ENCODE measurements at regions of chr1 and their contacts with region 1.

Region 1: GRCh38 chr1:45258059-45258650 is 51.8 kb upstream of the ZSWIM5 start:
- DNase-seq: no peak
- ATAC-seq: no peak
- H3K4me3 ChIP-seq: no peak overlapping the region
- H3K4me3 Mint-ChIP-seq: no peak overlapping the region
- H3K27ac ChIP-seq: no peak overlapping the region
- H3K27ac Mint-ChIP-seq: no peak overlapping the region
- H3K4me1 ChIP-seq: no peaks in the 10 kb centered on the region
- H3K4me1 Mint-ChIP-seq: no peaks in the 10 kb centered on the region
- H3K27me3 ChIP-seq: peaks cover 0 to 8% of the 10 kb centered on the region in 2 experiments
- H3K27me3 Mint-ChIP-seq: peaks cover 5% of the 10 kb centered on the region
- CTCF ChIP-seq: no peak

Region 2: DNA sequence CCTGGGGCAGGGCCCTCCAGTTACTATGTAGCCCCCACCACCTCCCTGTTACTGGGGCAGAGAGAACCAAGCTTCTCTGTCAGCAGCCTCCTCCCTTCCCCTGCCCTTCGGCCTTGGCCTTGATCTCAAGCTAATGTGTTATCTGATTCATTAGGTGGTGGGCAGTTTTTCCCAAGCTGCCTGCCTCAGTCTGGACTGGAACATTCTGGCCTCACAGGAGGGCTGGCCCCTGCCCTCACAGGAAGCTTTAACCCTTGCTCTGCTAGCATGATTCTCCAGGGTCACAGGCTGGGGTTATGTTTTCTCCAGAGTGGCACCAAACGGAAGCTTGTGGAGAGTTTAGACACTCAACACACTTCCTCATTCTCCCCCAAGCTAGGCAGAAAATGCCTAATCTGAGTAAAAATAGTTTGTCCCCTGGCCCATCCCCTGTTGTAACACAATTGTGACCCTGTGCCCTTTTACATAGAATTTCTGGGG is 1189.7 kb before region 1 on chr1:
- CTCF ChIA-PET with region 1: no interaction called
- POLR2A ChIA-PET with region 1: no interaction called
- intact Hi-C with region 1: loop called in 1 of 2 experiments (anchors 10 kb)
- DNase-seq: peak in 1 of 14 experiments; percentile 2
- ATAC-seq: no peak
- H3K4me3 ChIP-seq: no peak overlapping the region
- H3K4me3 Mint-ChIP-seq: no peak overlapping the region
- H3K27ac ChIP-seq: no peak overlapping the region
- H3K27ac Mint-ChIP-seq: no peak overlapping the region
- H3K4me1 ChIP-seq: no peaks in the 10 kb centered on the region
- H3K4me1 Mint-ChIP-seq: no peaks in the 10 kb centered on the region
- H3K27me3 ChIP-seq: peaks cover 5 to 7% of the 10 kb centered on the region in 2 experiments
- H3K27me3 Mint-ChIP-seq: peaks cover 27% of the 10 kb centered on the region
- CTCF ChIP-seq: no peak

Region 3: GRCh38 chr1:45205910-45206721 is 52.0 kb before region 1 on chr1 and contains the start of gene ZSWIM5:
- CTCF ChIA-PET with region 1: no interaction called
- POLR2A ChIA-PET with region 1: no interaction called
- intact Hi-C with region 1: no loop called
- DNase-seq: peak; percentile 23 to 88 (median 62)
- ATAC-seq: peak; percentile 85
- H3K4me3 ChIP-seq: peak within 1 kb of the TSS; percentile 74
- H3K4me3 Mint-ChIP-seq: peak within 1 kb of the TSS; percentile 99
- H3K27ac ChIP-seq: peak within 1 kb of the TSS in 1 of 2 donors; percentile 32
- H3K27ac Mint-ChIP-seq: peak within 1 kb of the TSS; percentile 80
- H3K4me1 ChIP-seq: peaks cover 20% of the 10 kb centered on the region
- H3K4me1 Mint-ChIP-seq: peaks cover 30% of the 10 kb centered on the region
- H3K27me3 ChIP-seq: peaks cover 0 to 3% of the 10 kb centered on the region in 2 experiments
- H3K27me3 Mint-ChIP-seq: peaks cover 16% of the 10 kb centered on the region
- CTCF ChIP-seq: no peak
- total RNA-seq, gene ZSWIM5: 0.91 to 1.1 TPM

Region 4: DNA sequence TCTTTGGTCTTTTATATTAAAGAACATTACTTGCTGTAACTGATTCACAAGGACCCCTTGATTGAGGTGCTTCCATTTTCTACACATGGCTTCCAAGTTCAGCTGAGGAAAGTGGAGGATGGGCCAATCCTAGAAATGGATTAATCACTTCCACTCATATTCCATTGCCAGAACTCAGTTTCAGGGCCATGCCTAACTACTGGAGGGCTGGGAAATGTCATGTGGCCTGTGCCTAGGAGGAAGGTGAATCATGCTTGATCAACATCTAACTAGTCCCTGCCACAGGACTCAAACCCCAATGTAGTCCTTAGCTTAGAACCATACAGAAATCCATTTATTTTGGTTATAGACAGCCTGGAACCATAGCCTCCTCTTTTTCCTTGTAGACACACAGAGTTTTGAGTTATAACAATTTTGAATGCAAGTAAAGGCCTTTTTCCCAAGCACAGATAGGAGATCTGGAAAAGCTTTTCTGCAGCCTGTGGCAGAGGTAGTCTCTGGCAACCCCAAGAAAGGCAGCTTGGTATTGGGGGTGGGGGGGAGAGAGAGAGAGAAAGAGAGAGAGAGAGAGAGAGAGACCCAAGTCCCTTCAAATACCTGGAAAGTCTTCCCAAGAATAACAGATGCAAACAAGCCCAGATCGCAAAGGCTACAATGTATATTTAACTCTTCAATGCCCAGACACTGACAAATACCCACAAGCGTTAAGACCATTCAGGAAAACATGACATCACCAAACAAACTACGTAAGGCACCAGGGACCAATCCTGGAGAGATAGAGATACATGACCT is 557.7 kb after region 1 on chr1:
- CTCF ChIA-PET with region 1: no interaction called
- POLR2A ChIA-PET with region 1: no interaction called
- intact Hi-C with region 1: no loop called
- DNase-seq: no peak
- ATAC-seq: no peak
- H3K4me3 ChIP-seq: no peak overlapping the region
- H3K4me3 Mint-ChIP-seq: no peak overlapping the region
- H3K27ac ChIP-seq: no peak overlapping the region
- H3K27ac Mint-ChIP-seq: no peak overlapping the region
- H3K4me1 ChIP-seq: no peaks in the 10 kb centered on the region
- H3K4me1 Mint-ChIP-seq: peaks cover 14% of the 10 kb centered on the region
- H3K27me3 ChIP-seq: no peaks in the 10 kb centered on the region
- H3K27me3 Mint-ChIP-seq: no peaks in the 10 kb centered on the region
- CTCF ChIP-seq: no peak

Measured in CD4-positive, alpha-beta T cell (primary cell).